KBM-7 (cell line): ENCODE measurements at regions of chr11 and their contacts with region 1.

Region 1: DNA sequence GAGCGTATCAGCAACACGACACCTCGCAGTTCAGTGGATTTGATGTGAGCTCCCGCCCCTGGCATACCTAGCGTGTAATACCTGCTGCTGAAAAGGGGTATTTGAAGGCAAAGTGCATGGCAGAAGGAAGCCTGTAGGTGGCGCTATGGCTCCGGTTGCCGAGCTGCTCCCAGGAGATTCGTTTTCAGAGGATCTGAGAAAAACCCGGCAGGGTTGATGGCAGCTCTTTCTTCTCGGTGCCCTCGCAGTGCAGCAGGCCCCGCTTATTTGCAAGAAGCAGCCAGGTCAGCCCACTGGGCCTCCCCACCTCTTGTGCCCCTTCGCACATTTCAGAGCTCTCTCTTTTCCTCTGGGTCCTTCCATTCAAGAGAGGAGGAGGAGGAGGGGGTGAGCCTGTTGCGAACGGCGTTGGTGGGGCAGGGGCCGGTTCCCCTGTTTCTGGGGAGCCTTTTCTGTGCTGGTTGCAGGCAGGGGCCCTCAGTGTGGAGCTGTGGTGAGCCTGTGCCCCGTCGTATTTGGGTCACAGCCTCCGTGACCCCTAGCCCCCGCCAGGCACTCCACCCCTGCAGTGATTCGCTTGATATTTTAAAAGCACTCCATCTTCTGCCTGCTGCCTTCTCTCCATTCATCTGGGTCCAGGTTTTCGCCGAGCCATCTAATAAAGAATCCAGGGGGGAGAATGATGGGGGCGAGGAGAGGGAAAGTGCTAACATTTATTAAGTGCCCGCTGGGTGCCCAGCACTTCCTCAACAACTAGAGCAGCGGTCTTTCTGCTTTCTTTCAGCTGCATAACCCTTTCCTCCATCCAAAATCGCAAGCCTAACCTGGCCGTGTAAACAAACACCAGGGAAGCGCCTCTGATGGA is 85.3 kb upstream of the SYT13 start:
- DNase-seq: peak; percentile 74

Region 2: DNA sequence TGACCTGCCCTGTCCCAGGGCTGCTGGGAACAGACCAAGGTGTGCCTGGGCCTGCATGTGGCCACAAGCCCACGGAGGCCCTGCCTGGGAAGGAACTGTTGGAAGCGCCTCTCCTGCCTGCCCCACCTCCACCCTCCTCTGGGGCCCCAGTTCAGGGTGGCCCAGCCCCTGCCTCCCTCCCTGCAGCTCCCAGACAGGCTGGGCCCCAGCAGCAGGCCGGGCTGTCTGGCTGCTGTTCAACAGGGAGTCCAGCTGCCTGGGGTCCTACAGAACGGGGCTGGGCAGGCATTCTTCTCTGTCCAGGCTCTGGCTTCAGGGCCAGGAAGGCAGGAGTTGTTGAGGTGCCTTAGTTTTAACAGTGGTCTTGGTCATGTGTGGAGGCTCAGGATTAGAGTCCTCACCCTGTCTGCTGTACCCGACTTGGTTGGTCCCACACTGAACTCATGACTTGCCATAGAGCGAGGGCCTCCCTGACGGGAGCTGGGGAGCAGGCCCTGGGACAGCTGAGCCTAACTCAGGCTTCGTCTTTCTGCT is 213.2 kb before region 1 on chr11:
- in situ Hi-C with region 1: no loop called
- DNase-seq: no peak

Region 3: DNA sequence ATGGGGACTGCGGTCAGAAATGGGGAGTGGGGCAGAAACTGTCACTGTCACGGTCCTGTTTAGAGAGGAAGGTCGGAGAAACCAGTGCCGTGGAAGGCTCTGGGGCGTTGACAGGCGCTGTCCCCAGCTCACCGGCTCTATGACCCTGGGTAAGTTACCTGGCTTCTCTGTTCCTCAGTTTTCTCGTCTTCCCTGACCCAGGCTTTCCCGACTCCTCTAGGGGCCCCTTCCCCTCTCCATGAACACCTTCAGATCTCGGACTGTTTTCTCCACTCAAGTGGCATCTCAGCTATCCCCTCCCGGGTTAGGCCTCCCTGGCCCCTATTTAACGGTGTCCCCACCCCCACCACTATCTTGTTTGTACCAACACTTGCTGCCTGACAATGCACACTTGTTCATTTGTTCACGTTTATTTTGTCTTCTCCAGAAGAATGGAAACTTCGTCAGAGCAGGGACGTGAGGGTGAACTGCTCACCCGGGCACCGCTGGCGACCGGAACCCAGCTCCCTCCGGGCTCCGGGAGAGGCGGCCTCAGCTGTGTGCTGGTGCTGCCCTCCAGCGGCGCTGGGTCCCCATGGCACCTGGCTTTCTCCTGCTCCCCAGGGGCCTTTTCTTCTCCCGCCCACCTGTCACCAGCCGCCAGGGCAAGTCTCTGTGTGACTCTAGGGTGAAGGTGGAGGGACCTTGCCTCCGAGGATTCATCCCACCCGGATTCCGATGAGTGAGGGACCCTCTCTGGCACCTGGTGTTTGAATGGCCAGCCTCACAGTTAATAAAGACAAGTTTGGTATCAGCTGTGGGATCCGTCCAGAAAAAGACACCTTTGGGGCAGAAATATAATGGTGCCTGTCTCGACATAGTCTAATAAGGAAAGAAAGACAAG is 400.3 kb after region 1 on chr11:
- in situ Hi-C with region 1: loop called (anchors 25 kb)
- DNase-seq: peak; percentile 87

Region 4: DNA sequence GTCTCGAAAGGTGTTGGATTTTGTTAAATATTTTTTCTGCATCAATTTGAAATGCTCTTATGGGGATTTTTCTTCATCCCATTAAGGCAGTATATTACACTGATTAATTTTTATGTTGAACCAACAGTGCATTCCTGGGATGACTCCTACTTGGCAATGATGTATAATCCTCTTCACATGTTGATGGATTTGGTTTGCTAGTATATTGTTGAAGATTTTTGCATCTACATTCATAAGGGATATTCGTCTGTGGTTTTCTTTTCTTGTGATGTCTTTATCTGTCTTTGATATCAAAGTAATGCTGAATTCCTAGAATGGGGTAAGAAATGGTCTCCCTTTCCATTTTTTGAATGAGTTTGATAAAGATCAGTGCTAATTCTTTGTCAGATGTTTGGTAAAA is 414.8 kb after region 1 on chr11:
- in situ Hi-C with region 1: no loop called
- DNase-seq: no peak